ENCODE measurements at regions of chr10 and their contacts with region 1.

Region 1: GRCh38 chr10:108005627-108006026 is 841.1 kb upstream of the SORCS1 start:
- DNase-seq: no peak
- ATAC-seq: 0 out of 3 replicates have a peak, but pooled peaks have one; percentile 21
- H3K4me3 ChIP-seq: no peak overlapping the region
- H3K27ac ChIP-seq: no peak overlapping the region
- H3K4me1 ChIP-seq: no peaks in the 10 kb centered on the region; the same call in 1 of the 2 replicates
- H3K27me3 ChIP-seq: no peaks in the 10 kb centered on the region
- CTCF ChIP-seq: no peak
- EP300 ChIP-seq: no peak
- POLR2A ChIP-seq: no peak
- RAD21 ChIP-seq: no peak

Region 2: DNA sequence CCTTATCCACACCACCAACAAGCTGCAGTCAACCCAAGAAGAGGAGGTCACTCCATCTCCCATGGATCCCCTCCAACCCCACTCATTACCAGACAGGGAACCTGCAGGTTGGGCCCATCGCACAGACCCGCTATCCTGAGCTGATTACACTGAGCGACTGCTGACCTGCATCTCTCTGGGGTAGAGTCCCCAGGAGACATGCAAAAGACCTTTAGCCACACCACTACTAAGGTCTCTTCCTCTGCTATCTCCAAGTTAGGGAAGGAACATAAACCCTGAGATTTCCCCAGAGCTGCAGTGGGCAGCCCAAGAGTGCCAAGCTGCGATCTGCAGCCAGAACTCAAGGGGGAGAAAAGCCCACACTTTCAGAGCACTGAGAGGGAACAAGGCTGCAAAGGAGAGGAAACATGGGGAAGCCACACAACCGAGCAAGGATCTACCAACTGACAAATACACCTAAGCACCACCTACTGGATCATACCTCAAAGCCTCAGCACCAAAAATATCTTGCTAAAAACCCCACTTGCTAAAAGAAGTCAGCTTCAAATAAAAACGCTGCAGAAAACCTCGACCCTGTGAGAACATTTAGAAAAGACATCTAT is 1139.3 kb before region 1 on chr10:
- CTCF ChIA-PET with region 1: no interaction called
- POLR2A ChIA-PET with region 1: no interaction called
- RAD21 ChIA-PET with region 1: no interaction called
- SMC1A ChIA-PET with region 1: no interaction called
- in situ Hi-C with region 1: no loop called
- intact Hi-C with region 1: no loop called
- DNase-seq: peak; percentile 58
- ATAC-seq: peak; percentile 68
- H3K4me3 ChIP-seq: no peak overlapping the region
- H3K27ac ChIP-seq: 0 out of 2 replicates have a peak overlapping the region, but pooled peaks have one; percentile 15
- H3K4me1 ChIP-seq: peaks cover 6% of the 10 kb centered on the region; the same call in 1 of the 2 replicates
- H3K27me3 ChIP-seq: no peaks in the 10 kb centered on the region
- CTCF ChIP-seq: peak; percentile 11 to 24 (median 15); a peak in 1 of 6 replicates
- EP300 ChIP-seq: no peak
- POLR2A ChIP-seq: no peak
- RAD21 ChIP-seq: peak; percentile 47

Region 3: DNA sequence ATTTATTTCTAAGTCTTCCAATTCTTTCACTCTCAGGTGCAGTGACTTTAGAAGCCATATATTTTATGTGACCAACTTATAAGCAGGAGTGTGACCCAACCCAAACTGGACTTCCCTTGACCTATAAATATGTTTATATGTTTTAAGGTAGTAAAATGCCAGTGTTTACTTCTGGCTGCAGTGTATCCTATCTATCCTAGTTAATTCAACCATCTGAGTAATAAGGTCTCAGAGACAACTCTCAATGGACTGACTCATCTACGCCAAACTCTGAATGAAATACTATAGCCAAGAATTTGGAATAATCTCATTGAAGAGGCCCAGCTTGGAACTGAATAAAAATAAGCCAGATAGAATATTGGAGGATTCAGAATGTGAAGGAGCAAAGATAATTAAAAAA is 296.6 kb before region 1 on chr10:
- CTCF ChIA-PET with region 1: no interaction called
- POLR2A ChIA-PET with region 1: no interaction called
- RAD21 ChIA-PET with region 1: no interaction called
- SMC1A ChIA-PET with region 1: no interaction called
- in situ Hi-C with region 1: no loop called
- intact Hi-C with region 1: no loop called
- DNase-seq: no peak
- ATAC-seq: no peak
- H3K4me3 ChIP-seq: no peak overlapping the region
- H3K27ac ChIP-seq: no peak overlapping the region
- H3K4me1 ChIP-seq: no peaks in the 10 kb centered on the region
- H3K27me3 ChIP-seq: no peaks in the 10 kb centered on the region
- CTCF ChIP-seq: no peak
- EP300 ChIP-seq: no peak
- POLR2A ChIP-seq: no peak
- RAD21 ChIP-seq: no peak

Region 4: DNA sequence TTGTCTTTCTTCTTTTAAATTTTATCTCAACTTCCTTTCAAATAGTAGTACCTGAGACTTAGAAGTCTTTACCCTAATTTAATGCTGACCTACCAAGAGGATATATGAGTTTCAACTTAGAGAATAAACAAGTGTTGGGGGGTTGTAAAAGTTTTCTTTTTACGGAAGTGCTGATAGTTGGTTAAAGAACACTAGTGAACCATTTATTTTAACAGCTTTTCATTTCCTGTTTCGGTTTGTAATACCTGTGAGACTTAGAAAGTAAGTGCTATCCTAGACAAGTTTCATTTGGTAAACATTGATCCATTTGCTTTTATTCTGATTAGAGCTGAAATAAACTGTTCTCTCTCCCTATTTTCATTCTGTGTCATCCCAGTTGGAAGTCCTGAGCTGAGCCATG is 158.0 kb before region 1 on chr10:
- CTCF ChIA-PET with region 1: no interaction called
- POLR2A ChIA-PET with region 1: interaction called, 3 read pairs
- RAD21 ChIA-PET with region 1: no interaction called
- SMC1A ChIA-PET with region 1: no interaction called
- in situ Hi-C with region 1: no loop called
- intact Hi-C with region 1: loop called (anchors 10 kb)
- DNase-seq: no peak
- ATAC-seq: peak; percentile 91
- H3K4me3 ChIP-seq: no peak overlapping the region
- H3K27ac ChIP-seq: no peak overlapping the region
- H3K4me1 ChIP-seq: no peaks in the 10 kb centered on the region
- H3K27me3 ChIP-seq: no peaks in the 10 kb centered on the region
- CTCF ChIP-seq: no peak
- EP300 ChIP-seq: no peak
- POLR2A ChIP-seq: no peak
- RAD21 ChIP-seq: no peak

Region 5: GRCh38 chr10:107986571-107986970 is 19.1 kb before region 1 on chr10:
- CTCF ChIA-PET with region 1: interaction called, 5 read pairs
- POLR2A ChIA-PET with region 1: no interaction called
- RAD21 ChIA-PET with region 1: interaction called, 3 read pairs
- SMC1A ChIA-PET with region 1: interaction called, 13 read pairs
- in situ Hi-C with region 1: no loop called
- intact Hi-C with region 1: no loop called
- DNase-seq: no peak
- ATAC-seq: no peak
- H3K4me3 ChIP-seq: no peak overlapping the region
- H3K27ac ChIP-seq: no peak overlapping the region
- H3K4me1 ChIP-seq: no peaks in the 10 kb centered on the region
- H3K27me3 ChIP-seq: no peaks in the 10 kb centered on the region
- CTCF ChIP-seq: no peak
- EP300 ChIP-seq: no peak
- POLR2A ChIP-seq: no peak
- RAD21 ChIP-seq: no peak

Region 6: DNA sequence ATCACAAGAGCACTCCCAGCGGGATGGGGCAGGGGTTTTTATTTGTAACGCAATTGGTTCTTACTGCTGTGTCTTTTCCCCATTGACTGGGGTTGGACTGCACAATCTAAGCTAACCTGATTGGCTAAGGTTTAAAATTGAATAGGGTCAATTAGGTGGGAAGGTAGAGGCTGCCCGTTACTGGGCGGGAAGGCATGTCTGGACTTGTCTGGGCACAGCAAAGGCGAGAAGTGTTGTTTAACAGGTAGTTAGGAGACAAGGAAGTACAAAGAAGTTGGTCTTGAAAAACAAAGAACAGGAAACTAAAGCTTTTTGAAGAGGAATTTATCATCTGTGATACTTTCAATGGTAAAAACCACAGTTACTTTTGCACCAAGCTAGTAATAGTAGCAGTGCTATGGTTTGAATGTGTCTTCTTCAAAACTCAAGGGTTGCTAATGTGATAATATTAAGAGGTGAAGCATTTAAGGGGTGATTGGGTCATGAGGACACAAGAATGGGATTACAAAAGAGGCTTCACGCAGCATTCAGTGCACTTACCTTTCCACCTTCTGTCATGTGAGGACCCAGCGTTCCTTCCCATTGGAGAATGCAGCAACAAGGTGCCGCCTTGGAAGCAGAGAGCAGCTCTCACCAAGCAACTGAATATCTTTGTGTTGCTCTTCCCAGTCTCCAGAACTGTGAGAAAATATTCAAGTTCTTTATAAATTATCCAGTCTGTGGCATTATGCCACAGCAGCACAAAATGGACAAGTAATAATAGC is 34.4 kb after region 1 on chr10:
- CTCF ChIA-PET with region 1: no interaction called
- POLR2A ChIA-PET with region 1: interaction called, 3 read pairs
- RAD21 ChIA-PET with region 1: interaction called, 3 read pairs
- SMC1A ChIA-PET with region 1: interaction called, 12 read pairs
- in situ Hi-C with region 1: no loop called
- intact Hi-C with region 1: no loop called
- DNase-seq: no peak
- ATAC-seq: peak; percentile 39
- H3K4me3 ChIP-seq: no peak overlapping the region
- H3K27ac ChIP-seq: no peak overlapping the region
- H3K4me1 ChIP-seq: peaks cover 3% of the 10 kb centered on the region; the same call in 1 of the 2 replicates
- H3K27me3 ChIP-seq: no peaks in the 10 kb centered on the region
- CTCF ChIP-seq: no peak
- EP300 ChIP-seq: no peak
- POLR2A ChIP-seq: no peak
- RAD21 ChIP-seq: no peak

Measured in GM12878 (cell line).